Naive thymus-derived CD4-positive, alpha-beta T cell (primary cell): ENCODE measurements at regions of chr19 and their contacts with region 1.

Region 1: GRCh38 chr19:43503501-43504425 is 783 bp downstream of the PHLDB3 start:
- DNase-seq: peak; percentile 93 to 99 (median 98)
- ATAC-seq: peak; percentile 99
- H3K4me3 ChIP-seq: peak overlapping the region; percentile 98
- H3K4me3 Mint-ChIP-seq: peak overlapping the region; percentile 90 to 98 (median 92)
- H3K27ac ChIP-seq: peak overlapping the region; percentile 96
- H3K27ac Mint-ChIP-seq: peak overlapping the region; percentile 90 to 100 (median 96)
- H3K4me1 ChIP-seq: peaks cover 5 to 18% of the 10 kb centered on the region in 2 donors
- H3K4me1 Mint-ChIP-seq: peaks cover 25 to 59% (median 39%) of the 10 kb centered on the region in 7 donors
- H3K27me3 ChIP-seq: no peaks in the 10 kb centered on the region
- H3K27me3 Mint-ChIP-seq: no peaks in the 10 kb centered on the region

Region 2: DNA sequence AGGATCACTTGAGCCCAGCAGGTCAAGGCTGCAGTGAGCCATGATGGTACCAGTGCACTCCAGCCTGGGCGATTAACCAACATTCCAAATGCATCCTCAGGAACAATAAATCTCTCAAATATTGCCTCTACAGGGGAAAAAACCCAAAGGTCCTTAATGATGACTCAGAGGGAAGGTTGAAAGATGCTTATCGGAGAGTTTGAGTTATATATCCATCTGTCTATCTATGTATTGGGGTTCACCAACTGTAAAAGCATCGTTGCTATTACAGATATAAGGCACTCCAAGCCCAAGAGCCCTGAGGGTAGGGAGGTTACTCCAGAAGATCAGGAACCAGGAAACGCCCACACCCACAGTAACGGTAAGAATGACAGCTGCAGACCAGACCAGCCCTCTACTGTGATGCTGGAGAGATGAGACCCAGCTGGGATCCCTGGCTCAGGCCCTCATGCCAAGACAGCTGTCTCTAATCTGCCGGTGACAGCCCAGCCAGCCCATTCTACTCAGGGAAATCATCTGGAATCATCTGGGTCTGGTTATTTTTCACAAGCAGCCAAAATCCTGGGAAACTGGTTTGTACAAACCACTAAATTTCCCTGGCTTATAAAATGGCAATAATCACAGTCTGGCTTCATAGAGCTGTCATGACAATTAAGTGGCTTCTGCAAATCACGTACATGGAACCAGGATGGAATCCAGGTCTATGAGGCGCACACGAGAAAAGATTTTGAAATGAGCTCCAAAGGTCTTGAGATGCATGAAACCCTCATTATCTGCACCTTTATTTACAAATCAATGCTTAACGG is 65.3 kb before region 1 on chr19:
- CTCF ChIA-PET with region 1: interaction called, 8 read pairs
- POLR2A ChIA-PET with region 1: interaction called, 15 read pairs
- intact Hi-C with region 1: loop called in 1 of 2 experiments (anchors 2 kb)
- DNase-seq: peak in 2 of 9 donors; percentile 19 to 21
- ATAC-seq: peak; percentile 4
- H3K4me3 ChIP-seq: peak overlapping the region; percentile 33
- H3K4me3 Mint-ChIP-seq: peak overlapping the region; percentile 49 to 77 (median 64)
- H3K27ac ChIP-seq: peak overlapping the region; percentile 72
- H3K27ac Mint-ChIP-seq: peak overlapping the region; percentile 81 to 99 (median 93)
- H3K4me1 ChIP-seq: peaks cover 23 to 30% of the 10 kb centered on the region in 2 donors
- H3K4me1 Mint-ChIP-seq: peaks cover 29 to 75% (median 62%) of the 10 kb centered on the region in 7 donors
- H3K27me3 ChIP-seq: no peaks in the 10 kb centered on the region
- H3K27me3 Mint-ChIP-seq: peaks cover 0 to 2% (median 0%) of the 10 kb centered on the region in 5 donors

Region 3: DNA sequence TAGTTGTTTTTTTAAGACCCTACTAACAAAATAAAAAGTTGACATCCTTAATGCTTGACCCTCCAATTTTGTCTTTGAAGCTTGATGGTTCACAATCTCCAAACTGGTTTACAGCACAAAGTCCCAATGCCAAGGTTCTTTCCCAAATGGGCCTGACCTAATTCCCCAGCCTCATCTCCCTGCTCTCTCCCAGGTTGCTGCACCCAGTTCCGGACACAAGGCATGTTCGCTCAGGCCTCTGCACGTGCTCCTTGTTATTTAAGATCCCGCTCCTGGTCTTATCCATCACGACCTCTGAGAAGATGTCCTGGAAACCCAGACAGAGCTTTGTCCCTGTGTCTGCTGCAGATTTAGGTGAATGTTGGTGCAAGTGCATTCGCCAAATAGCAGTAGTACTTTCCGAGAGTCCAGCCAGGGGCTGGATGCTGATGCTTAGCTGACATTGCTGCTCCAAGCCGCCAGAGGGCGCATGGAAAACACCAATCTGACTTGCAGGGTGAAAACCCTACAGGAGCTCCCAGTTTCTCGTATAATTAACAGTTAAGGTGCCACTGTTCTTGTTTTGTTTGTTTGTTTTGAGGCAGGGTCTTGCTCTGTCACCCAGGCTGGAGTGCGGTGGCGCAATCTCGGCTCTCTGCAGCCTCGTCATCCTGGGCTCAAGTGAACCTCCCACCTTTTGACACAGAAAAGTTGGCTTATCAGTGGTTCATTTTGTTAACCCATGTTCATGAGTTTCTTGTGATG is 56.8 kb before region 1 on chr19:
- CTCF ChIA-PET with region 1: interaction called, 7 read pairs
- POLR2A ChIA-PET with region 1: interaction called, 14 read pairs
- intact Hi-C with region 1: loop called (anchors 1 kb)
- DNase-seq: peak; percentile 70 to 84 (median 78)
- ATAC-seq: peak; percentile 90
- H3K4me3 ChIP-seq: no peak overlapping the region
- H3K4me3 Mint-ChIP-seq: peak overlapping the region in 1 of 10 donors; percentile 13
- H3K27ac ChIP-seq: no peak overlapping the region
- H3K27ac Mint-ChIP-seq: peak overlapping the region in 8 of 9 donors; percentile 7 to 96 (median 86)
- H3K4me1 ChIP-seq: peaks cover 3 to 4% of the 10 kb centered on the region in 2 donors
- H3K4me1 Mint-ChIP-seq: peaks cover 23 to 46% (median 32%) of the 10 kb centered on the region in 7 donors
- H3K27me3 ChIP-seq: no peaks in the 10 kb centered on the region
- H3K27me3 Mint-ChIP-seq: peaks cover 0 to 2% (median 0%) of the 10 kb centered on the region in 5 donors

Region 4: DNA sequence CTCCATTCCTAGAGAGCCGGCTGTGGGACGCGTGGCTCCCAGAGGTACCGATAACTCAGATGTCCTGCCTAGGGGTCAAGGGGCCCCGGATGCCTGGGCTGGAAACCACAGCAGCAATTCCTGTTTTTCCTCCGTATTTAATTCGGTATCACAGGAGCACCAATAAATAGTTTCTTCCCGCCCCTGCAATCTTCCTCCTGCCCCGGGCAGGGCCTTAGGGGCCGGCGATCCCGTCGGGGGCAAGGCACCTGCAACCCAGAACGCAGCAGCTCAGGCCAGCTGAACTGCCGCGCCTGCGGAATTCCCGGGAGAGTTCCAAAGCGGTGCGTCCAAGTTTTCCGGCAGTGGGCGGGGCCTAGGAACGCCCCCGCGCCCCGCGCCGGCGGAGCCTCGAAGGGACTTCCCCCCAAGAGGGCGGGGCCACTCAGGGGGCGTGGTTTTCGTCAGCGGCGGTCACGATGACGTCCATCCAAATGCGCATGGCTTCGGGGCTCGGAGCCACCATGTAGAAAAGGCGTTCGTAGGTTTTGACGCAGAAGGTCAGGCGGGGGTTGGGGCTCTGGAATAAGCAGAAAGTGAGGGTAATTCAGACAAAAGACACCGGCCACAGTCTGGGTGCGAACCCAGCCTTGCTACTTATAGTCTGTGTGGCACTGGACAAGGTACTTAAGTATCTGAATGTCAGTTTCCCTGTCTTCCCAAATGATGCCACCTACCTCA is 28.6 kb before region 1 on chr19:
- CTCF ChIA-PET with region 1: no interaction called
- POLR2A ChIA-PET with region 1: interaction called, 9 read pairs
- intact Hi-C with region 1: loop called (anchors 1 kb)
- DNase-seq: peak; percentile 95 to 99 (median 98)
- ATAC-seq: peak; percentile 93
- H3K4me3 ChIP-seq: peak overlapping the region; percentile 77
- H3K4me3 Mint-ChIP-seq: peak overlapping the region; percentile 75 to 93 (median 86)
- H3K27ac ChIP-seq: peak overlapping the region; percentile 92
- H3K27ac Mint-ChIP-seq: peak overlapping the region; percentile 93 to 100 (median 98)
- H3K4me1 ChIP-seq: peaks cover 9 to 30% of the 10 kb centered on the region in 2 donors
- H3K4me1 Mint-ChIP-seq: peaks cover 13 to 55% (median 41%) of the 10 kb centered on the region in 7 donors
- H3K27me3 ChIP-seq: no peaks in the 10 kb centered on the region
- H3K27me3 Mint-ChIP-seq: no peaks in the 10 kb centered on the region

Region 5: DNA sequence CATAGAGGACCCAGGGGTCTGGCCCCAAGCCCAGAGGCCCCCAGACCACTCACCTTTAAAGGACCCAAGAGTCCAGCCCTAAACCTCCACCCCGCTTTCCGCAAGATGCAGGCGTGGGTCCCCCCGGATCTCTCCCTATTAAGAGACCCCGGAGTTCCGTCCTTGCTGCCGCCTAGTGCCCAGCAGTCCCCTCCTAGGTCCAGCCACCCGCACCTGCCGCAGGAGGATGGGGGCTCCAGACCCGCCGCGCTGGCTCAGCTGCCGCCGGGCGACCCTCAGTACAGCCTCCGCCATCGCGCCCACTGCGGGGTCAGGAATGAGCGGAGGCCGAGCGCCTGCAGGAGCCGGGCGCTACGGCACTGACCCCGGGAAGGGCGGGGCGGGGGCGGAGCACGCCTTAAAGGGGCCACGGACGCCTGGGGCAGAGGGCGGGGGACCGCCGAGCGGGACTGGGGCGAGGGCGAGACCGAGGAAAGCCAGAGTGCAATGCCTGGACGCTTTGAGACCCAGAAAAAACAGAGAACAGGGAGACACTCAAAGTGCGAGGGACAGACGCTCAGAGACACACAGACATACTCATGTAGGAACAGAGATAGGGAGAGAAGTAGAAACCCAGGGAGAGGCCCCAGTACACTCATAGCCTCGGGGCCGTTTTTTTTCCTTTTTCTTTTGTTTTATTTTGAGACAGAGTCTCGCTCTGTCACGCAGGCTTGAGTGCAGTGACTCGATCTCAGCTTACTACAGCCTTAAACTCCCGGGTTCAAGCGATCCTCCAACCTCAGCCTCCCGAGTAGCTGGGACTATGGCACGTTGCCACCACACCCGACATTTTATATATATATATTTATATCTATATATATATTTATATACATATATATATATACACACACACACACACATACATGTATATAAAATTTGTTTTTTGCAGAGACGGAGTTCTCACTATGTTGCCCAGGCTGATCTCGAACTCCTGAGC is 23.4 kb after region 1 on chr19 and contains the start of gene ETHE1:
- CTCF ChIA-PET with region 1: no interaction called
- POLR2A ChIA-PET with region 1: interaction called, 9 read pairs
- intact Hi-C with region 1: loop called (anchors 1 kb)
- DNase-seq: peak; percentile 39 to 86 (median 50)
- ATAC-seq: peak; percentile 86
- H3K4me3 ChIP-seq: peak within 1 kb of the TSS; percentile 75
- H3K4me3 Mint-ChIP-seq: peak within 1 kb of the TSS; percentile 78 to 94 (median 84)
- H3K27ac ChIP-seq: peak within 1 kb of the TSS; percentile 81
- H3K27ac Mint-ChIP-seq: peak within 1 kb of the TSS; percentile 75 to 96 (median 86)
- H3K4me1 ChIP-seq: peaks cover 15 to 24% of the 10 kb centered on the region in 2 donors
- H3K4me1 Mint-ChIP-seq: peaks cover 18 to 38% (median 25%) of the 10 kb centered on the region in 7 donors
- H3K27me3 ChIP-seq: no peaks in the 10 kb centered on the region
- H3K27me3 Mint-ChIP-seq: no peaks in the 10 kb centered on the region
- total RNA-seq, gene ETHE1: 20.3 to 58.6 (median 23.9) TPM

Region 6: DNA sequence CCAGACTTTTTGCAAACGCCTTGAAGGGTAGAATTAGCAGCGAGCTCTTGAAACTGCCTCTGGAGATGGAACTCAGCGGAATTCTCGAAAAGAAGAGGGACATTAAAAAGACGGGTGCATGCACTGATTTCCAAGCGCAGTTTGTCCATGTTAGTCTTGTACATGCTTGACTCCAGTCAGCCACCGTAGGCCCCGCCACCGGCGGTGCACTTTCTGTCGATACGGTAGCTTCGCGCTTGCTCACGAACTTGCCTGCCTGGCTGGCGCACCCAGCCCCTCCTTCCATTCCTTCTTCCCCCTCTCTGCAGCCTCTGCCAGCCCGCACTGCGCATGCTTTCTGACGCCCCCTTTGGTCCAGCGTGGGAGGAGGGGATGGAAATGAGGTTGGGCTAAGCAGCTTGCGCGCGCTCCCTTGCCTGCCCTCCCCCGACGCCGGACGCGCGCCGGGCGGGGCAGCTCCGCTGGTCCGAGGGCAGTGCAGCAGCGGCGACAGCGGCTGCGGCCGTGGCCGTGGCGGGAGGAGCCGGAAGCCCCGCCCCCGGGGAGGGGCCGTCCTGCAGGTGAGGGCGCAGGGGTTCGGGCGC is 29.3 kb after region 1 on chr19 and contains the start of gene ZNF575:
- CTCF ChIA-PET with region 1: no interaction called
- POLR2A ChIA-PET with region 1: interaction called, 9 read pairs
- intact Hi-C with region 1: loop called (anchors 1 kb)
- DNase-seq: peak; percentile 61 to 91 (median 87)
- ATAC-seq: peak; percentile 64
- H3K4me3 ChIP-seq: peak within 1 kb of the TSS; percentile 98
- H3K4me3 Mint-ChIP-seq: peak within 1 kb of the TSS; percentile 88 to 98 (median 95)
- H3K27ac ChIP-seq: peak within 1 kb of the TSS; percentile 68
- H3K27ac Mint-ChIP-seq: peak within 1 kb of the TSS; percentile 90 to 98 (median 95)
- H3K4me1 ChIP-seq: peaks cover 12 to 14% of the 10 kb centered on the region in 2 donors
- H3K4me1 Mint-ChIP-seq: peaks cover 5 to 27% (median 18%) of the 10 kb centered on the region in 7 donors
- H3K27me3 ChIP-seq: no peaks in the 10 kb centered on the region
- H3K27me3 Mint-ChIP-seq: no peaks in the 10 kb centered on the region
- total RNA-seq, gene ZNF575: 4.5 to 10.7 (median 5.6) TPM

Region 7: GRCh38 chr19:43575156-43575950 is 71.6 kb after region 1 on chr19 and contains the starts of genes PINLYP and XRCC1:
- CTCF ChIA-PET with region 1: no interaction called
- POLR2A ChIA-PET with region 1: no interaction called
- intact Hi-C with region 1: no loop called
- DNase-seq: peak; percentile 85 to 99 (median 95)
- ATAC-seq: peak; percentile 99
- H3K4me3 ChIP-seq: peak within 1 kb of the TSS; percentile 77
- H3K4me3 Mint-ChIP-seq: peak within 1 kb of the TSS; percentile 92 to 98 (median 96)
- H3K27ac ChIP-seq: peak within 1 kb of the TSS; percentile 98
- H3K27ac Mint-ChIP-seq: peak within 1 kb of the TSS; percentile 93 to 99 (median 96)
- H3K4me1 ChIP-seq: peaks cover 12 to 14% of the 10 kb centered on the region in 2 donors
- H3K4me1 Mint-ChIP-seq: peaks cover 26 to 63% (median 51%) of the 10 kb centered on the region in 7 donors
- H3K27me3 ChIP-seq: no peaks in the 10 kb centered on the region
- H3K27me3 Mint-ChIP-seq: peaks cover 0 to 5% (median 0%) of the 10 kb centered on the region in 5 donors
- total RNA-seq, gene PINLYP: 0.27 to 5.8 (median 0.59) TPM
- total RNA-seq, gene XRCC1: 32.0 to 36.1 (median 35.4) TPM

Region 8: GRCh38 chr19:43619262-43620060 is 115.7 kb after region 1 on chr19 and contains the start of gene ZNF428:
- CTCF ChIA-PET with region 1: no interaction called
- POLR2A ChIA-PET with region 1: no interaction called
- intact Hi-C with region 1: loop called in 1 of 2 experiments (anchors 1 kb)
- DNase-seq: peak; percentile 77 to 91 (median 84)
- ATAC-seq: peak; percentile 93
- H3K4me3 ChIP-seq: peak within 1 kb of the TSS; percentile 63
- H3K4me3 Mint-ChIP-seq: peak within 1 kb of the TSS; percentile 95 to 99 (median 98)
- H3K27ac ChIP-seq: peak within 1 kb of the TSS; percentile 83
- H3K27ac Mint-ChIP-seq: peak within 1 kb of the TSS; percentile 93 to 99 (median 97)
- H3K4me1 ChIP-seq: peaks cover 9 to 12% of the 10 kb centered on the region in 2 donors
- H3K4me1 Mint-ChIP-seq: peaks cover 18 to 59% (median 36%) of the 10 kb centered on the region in 7 donors
- H3K27me3 ChIP-seq: no peaks in the 10 kb centered on the region
- H3K27me3 Mint-ChIP-seq: no peaks in the 10 kb centered on the region
- total RNA-seq, gene ZNF428: 21.7 to 29.1 (median 25.9) TPM